Colonic mucosa (tissue), 4 donors: ENCODE measurements at regions of chr21 and their contacts with region 1.

Region 1: DNA sequence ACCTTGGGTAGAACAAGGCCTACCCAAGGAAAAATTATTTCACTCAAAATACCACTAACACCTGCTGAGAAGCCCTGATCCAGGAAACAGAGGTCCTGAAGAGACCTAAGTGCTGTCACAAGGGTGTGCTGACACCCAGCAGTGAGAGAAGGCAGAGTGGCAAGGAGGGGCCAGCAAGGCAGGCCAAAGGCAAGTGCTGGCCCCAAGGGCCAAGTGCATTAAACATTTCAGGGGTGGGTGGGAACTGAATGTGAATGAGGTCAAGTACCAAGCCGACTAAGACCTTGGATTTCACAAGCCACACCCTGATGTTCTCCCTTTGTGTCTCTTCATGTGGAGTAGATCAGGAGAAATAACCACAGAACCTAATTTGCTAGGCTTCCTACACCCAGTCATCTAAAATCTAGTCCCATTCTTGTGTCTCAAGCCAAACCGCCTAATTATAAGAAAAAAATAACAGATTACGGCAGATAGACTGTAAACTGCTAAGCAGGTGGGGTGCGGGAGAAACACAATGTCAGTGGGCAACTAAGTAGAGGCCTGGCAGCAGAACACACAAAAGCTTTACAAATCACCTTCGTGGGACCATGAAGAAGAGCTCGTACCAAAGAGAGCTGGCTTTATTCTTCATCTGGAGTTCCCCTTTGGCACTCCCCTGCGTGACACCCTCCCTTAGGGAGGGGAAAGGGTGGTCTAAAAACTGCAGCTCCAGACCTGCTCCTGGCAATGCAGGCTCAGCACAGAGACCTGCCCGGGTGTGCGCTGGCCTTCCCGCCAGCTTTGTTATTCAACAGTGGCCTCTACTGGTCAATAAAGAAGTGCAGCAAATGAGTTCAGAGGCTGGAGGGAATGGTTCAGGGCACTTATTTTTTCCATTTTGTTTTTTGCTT is 8.7 kb downstream of the UBE2G2 start:
- DNase-seq: peak; percentile 54
- H3K4me3 ChIP-seq: no peak overlapping the region
- H3K27ac ChIP-seq: no peak overlapping the region
- H3K4me1 ChIP-seq: no peaks in the 10 kb centered on the region
- H3K27me3 ChIP-seq: no peaks in the 10 kb centered on the region
- CTCF ChIP-seq: peak; percentile 64

Region 2: GRCh38 chr21:44509544-44509943 is 283.4 kb before region 1 on chr21:
- intact Hi-C with region 1: loop called (anchors 5 kb)
- DNase-seq: peak; percentile 46
- H3K4me3 ChIP-seq: no peak overlapping the region
- H3K27ac ChIP-seq: no peak overlapping the region
- H3K4me1 ChIP-seq: no peaks in the 10 kb centered on the region
- H3K27me3 ChIP-seq: no peaks in the 10 kb centered on the region
- CTCF ChIP-seq: no peak

Region 3: GRCh38 chr21:44572966-44573583 is 219.9 kb before region 1 on chr21:
- intact Hi-C with region 1: no loop called
- DNase-seq: no peak
- H3K4me3 ChIP-seq: no peak overlapping the region
- H3K27ac ChIP-seq: no peak overlapping the region
- H3K4me1 ChIP-seq: no peaks in the 10 kb centered on the region
- H3K27me3 ChIP-seq: no peaks in the 10 kb centered on the region
- CTCF ChIP-seq: no peak

Region 4: DNA sequence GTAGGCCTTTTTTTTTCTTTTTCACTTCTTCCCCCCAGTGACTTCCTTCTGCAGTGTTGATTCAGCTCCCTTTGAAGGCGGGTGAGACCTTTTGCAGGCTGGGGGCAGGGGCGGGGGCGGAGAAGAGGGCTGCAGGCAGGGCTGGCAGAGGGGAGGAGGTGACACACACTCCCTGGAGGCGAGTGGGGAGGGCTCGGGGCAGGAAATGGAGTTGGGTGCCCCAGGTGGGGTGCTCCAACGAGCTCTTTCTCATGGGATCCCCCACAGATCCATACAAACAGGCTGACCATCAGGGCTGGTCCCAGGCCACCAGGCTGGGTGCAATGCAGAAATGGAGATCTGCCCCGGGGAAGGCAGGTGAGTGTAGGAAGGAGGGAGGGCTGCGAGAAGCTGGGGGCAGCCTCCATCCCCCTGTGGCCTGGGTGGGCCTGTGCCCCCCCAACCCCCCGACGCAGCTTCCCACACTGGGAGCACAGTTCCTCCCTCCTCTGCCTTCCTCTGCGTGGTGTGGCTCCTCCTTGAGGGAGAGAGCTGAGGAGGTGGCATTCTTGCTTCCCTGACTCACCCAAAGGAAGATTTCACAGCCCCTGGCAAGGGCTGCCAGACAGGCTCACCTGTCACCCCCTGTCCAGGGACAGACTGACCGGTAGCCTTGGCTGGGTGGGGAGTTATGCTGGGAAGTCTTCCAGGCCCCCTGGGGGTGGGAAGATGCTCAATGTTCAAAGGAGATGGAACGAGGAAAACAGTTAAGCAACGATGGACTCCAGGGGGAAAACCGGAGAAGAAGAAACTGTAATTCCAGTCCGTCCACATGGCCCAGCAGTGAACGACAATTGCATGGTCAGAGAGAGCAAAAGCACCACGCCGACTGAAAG is 134.9 kb after region 1 on chr21:
- intact Hi-C with region 1: no loop called
- DNase-seq: peak; percentile 42
- H3K4me3 ChIP-seq: peak overlapping the region; percentile 7
- H3K27ac ChIP-seq: peak overlapping the region; percentile 44
- H3K4me1 ChIP-seq: peaks cover 9% of the 10 kb centered on the region
- H3K27me3 ChIP-seq: peaks cover 27% of the 10 kb centered on the region
- CTCF ChIP-seq: no peak